ENCODE measurements at regions of chr15 and their contacts with region 1.

Region 1: DNA sequence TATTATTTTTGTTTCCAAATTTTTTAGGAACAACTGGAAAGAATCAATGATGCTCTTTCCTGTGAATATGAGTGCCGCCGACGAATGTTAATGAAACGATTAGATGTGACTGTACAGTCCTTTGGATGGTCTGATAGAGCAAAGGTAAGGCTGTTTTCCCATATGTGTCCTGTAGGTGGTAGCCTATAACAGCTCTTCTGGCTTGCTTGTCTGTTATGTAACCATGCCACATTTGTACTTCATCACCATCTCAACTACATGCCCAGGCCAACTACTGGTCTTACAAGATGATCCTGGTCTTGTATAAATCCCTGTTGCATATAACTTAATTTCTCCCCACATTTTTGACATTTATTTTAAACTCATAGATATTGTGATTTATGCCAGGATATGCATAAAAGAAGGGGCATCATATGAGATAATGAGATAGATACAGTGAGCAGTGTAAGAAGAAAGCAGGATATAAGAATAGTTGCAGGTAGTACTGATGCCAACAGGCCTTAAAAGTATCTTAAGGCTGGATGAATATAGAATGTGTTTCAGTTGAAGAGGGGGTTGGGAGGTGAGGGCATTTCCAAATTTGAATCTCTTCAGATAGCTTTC is 20.3 kb downstream of the FAM98B start:
- DNase-seq: peak in 1 of 2 donors; percentile 85
- ATAC-seq: peak; percentile 93 to 100 (median 99)
- H3K4me3 ChIP-seq: no peak overlapping the region
- H3K4me3 Mint-ChIP-seq: peak overlapping the region; percentile 14
- H3K27ac ChIP-seq: no peak overlapping the region
- H3K27ac Mint-ChIP-seq: peak overlapping the region; percentile 64 to 71
- H3K4me1 ChIP-seq: no peaks in the 10 kb centered on the region
- H3K4me1 Mint-ChIP-seq: peaks cover 5 to 7% of the 10 kb centered on the region in 2 donors
- H3K27me3 ChIP-seq: no peaks in the 10 kb centered on the region
- H3K27me3 Mint-ChIP-seq: no peaks in the 10 kb centered on the region
- CTCF ChIP-seq: peak; percentile 83

Region 2: GRCh38 chr15:38531509-38531908 is 57.3 kb after region 1 on chr15:
- intact Hi-C with region 1: loop called (anchors 10 kb)
- DNase-seq: no peak
- ATAC-seq: no peak
- H3K4me3 ChIP-seq: no peak overlapping the region
- H3K4me3 Mint-ChIP-seq: no peak overlapping the region
- H3K27ac ChIP-seq: no peak overlapping the region
- H3K27ac Mint-ChIP-seq: peak overlapping the region; percentile 17 to 82
- H3K4me1 ChIP-seq: peaks cover 29% of the 10 kb centered on the region
- H3K4me1 Mint-ChIP-seq: peaks cover 90 to 94% of the 10 kb centered on the region in 2 donors
- H3K27me3 ChIP-seq: no peaks in the 10 kb centered on the region
- H3K27me3 Mint-ChIP-seq: no peaks in the 10 kb centered on the region
- CTCF ChIP-seq: no peak

Region 3: DNA sequence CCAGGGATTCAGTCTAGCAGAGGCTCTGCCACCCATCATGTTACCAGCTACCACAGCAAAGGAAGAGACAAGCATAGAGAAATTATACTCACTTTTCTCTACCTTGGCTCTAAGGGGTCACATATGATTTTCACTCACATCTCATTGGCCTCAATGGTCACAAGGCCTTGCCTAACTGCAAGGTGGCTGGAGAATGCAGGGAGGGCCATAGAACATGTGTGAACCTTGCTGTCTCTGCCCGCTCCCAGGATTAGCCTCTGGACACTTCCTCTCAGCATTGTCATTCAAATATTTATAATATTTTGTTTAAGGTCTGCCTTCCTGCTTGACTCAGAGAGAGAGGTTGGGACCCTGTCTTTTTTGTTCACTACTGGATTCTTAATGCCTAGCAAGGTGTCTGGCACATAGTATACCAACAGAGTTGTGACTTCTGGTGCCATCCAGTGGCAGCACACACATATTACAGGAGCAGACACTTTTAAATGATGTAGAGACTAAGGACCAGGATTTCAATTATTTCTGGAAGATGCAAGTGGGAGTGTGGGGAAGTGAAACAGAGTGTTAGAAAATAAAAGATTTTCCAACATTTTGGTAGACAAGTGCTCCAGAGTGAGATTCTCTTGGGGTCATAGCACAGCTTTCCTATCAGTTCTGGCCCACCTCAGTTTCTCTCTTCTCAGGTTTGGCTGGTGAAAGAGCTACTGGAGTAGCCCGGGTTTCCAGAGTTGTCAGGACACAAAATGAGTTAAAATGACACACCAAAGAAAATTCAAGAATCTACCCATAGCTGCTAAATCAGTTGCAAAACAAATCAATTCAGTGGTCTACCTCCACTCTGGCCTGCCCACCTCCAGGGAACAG is 209.4 kb after region 1 on chr15:
- intact Hi-C with region 1: loop called (anchors 1 kb)
- DNase-seq: peak; percentile 58 to 90
- ATAC-seq: peak; percentile 89 to 98 (median 97)
- H3K4me3 ChIP-seq: no peak overlapping the region
- H3K4me3 Mint-ChIP-seq: peak overlapping the region; percentile 7
- H3K27ac ChIP-seq: no peak overlapping the region
- H3K27ac Mint-ChIP-seq: peak overlapping the region; percentile 41 to 80
- H3K4me1 ChIP-seq: peaks cover 46% of the 10 kb centered on the region
- H3K4me1 Mint-ChIP-seq: peaks cover 41 to 43% of the 10 kb centered on the region in 2 donors
- H3K27me3 ChIP-seq: no peaks in the 10 kb centered on the region
- H3K27me3 Mint-ChIP-seq: no peaks in the 10 kb centered on the region
- CTCF ChIP-seq: peak; percentile 90

Region 4: GRCh38 chr15:38690689-38691332 is 216.6 kb after region 1 on chr15:
- intact Hi-C with region 1: loop called (anchors 1 kb)
- DNase-seq: peak; percentile 70 to 95
- ATAC-seq: peak; percentile 81 to 95 (median 90)
- H3K4me3 ChIP-seq: no peak overlapping the region
- H3K4me3 Mint-ChIP-seq: no peak overlapping the region
- H3K27ac ChIP-seq: no peak overlapping the region
- H3K27ac Mint-ChIP-seq: no peak overlapping the region
- H3K4me1 ChIP-seq: peaks cover 30% of the 10 kb centered on the region
- H3K4me1 Mint-ChIP-seq: peaks cover 31% of the 10 kb centered on the region in 2 donors
- H3K27me3 ChIP-seq: no peaks in the 10 kb centered on the region
- H3K27me3 Mint-ChIP-seq: no peaks in the 10 kb centered on the region
- CTCF ChIP-seq: peak; percentile 84

Region 5: GRCh38 chr15:38699633-38700230 is 225.5 kb after region 1 on chr15:
- intact Hi-C with region 1: loop called (anchors 2 kb)
- DNase-seq: peak; percentile 50 to 90
- ATAC-seq: peak; percentile 49 to 72 (median 51)
- H3K4me3 ChIP-seq: no peak overlapping the region
- H3K4me3 Mint-ChIP-seq: peak overlapping the region; percentile 4
- H3K27ac ChIP-seq: no peak overlapping the region
- H3K27ac Mint-ChIP-seq: peak overlapping the region; percentile 41 to 59
- H3K4me1 ChIP-seq: peaks cover 26% of the 10 kb centered on the region
- H3K4me1 Mint-ChIP-seq: peaks cover 36 to 39% of the 10 kb centered on the region in 2 donors
- H3K27me3 ChIP-seq: no peaks in the 10 kb centered on the region
- H3K27me3 Mint-ChIP-seq: no peaks in the 10 kb centered on the region
- CTCF ChIP-seq: peak; percentile 85

Region 6: DNA sequence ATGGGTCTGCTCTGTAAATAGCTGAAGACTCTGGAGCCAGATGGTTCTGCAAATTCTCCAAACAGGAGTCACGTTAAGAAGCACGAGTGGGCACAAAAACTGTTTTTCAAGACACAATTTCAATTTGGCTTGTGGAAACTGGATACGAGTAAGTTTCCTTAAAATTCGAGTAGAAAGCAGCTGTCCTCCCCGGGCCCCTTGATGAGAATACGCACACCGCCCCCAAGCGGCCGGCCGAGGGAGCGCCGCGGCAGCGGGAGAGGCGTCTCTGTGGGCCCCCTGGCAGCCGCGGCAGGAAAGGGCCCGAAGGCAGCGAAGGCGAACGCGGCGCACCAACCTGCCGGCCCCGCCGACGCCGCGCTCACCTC is 1105.8 kb after region 1 on chr15:
- intact Hi-C with region 1: loop called (anchors 10 kb)
- DNase-seq: peak; percentile 86 to 94
- ATAC-seq: peak; percentile 93 to 96 (median 94)
- H3K4me3 ChIP-seq: peak overlapping the region; percentile 47
- H3K4me3 Mint-ChIP-seq: peak overlapping the region; percentile 78
- H3K27ac ChIP-seq: no peak overlapping the region
- H3K27ac Mint-ChIP-seq: peak overlapping the region; percentile 37 to 76
- H3K4me1 ChIP-seq: peaks cover 30% of the 10 kb centered on the region
- H3K4me1 Mint-ChIP-seq: peaks cover 29 to 48% of the 10 kb centered on the region in 2 donors
- H3K27me3 ChIP-seq: peaks cover 5% of the 10 kb centered on the region
- H3K27me3 Mint-ChIP-seq: peaks cover 8 to 23% of the 10 kb centered on the region in 2 donors
- CTCF ChIP-seq: peak; percentile 98

Measured in natural killer cell (primary cell).